Vagina (tissue), 2 donors: ENCODE measurements at regions of chr14 and their contacts with region 1.

Region 1: DNA sequence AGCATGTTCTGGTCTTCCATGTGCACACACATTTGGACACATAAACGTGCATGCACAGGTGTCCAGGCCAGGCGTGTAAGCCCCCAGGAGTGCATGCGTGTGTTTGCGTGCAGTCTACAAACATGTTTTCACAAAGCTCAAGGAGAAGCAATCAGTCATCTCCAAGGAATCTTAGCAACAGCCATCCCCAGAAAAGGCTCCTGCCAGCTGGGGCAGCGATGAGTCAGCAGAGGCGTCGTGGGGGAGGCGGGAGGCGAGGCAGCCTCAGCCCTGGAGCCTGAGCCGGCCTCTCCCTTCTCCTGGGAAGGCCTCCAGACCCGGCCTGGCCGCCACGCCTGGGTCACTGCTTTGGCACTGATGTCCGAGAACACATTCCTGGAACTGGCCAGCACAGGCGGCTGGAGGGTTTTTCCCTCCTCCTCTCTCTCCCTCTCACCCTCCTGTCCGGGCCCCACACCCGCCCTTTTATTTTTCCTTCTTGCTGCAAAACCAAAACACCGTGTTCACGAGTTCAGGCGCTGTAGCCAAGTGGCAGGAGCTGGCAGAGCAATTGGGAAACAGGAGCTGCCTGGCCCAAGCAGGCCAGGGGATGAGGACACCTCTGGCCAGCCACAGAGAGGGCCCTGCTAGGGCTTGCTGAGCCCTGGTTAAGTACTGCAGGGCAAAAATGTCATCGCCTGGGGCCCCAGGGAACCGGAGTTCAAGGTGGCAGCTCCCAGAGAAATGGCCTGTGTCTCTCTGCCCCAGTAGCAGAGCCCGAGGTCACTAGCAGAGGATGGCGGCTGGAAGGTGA is 92.7 kb downstream of the LRRC74A start:
- DNase-seq: peak in 1 of 2 donors; percentile 99
- H3K4me3 ChIP-seq: peak overlapping the region in 1 of 2 donors; percentile 12
- H3K27ac ChIP-seq: peak overlapping the region; percentile 83
- H3K4me1 ChIP-seq: peaks cover 77% of the 10 kb centered on the region
- H3K27me3 ChIP-seq: no peaks in the 10 kb centered on the region
- CTCF ChIP-seq: peak in 1 of 3 experiments; percentile 24
- POLR2A ChIP-seq: no peak

Region 2: DNA sequence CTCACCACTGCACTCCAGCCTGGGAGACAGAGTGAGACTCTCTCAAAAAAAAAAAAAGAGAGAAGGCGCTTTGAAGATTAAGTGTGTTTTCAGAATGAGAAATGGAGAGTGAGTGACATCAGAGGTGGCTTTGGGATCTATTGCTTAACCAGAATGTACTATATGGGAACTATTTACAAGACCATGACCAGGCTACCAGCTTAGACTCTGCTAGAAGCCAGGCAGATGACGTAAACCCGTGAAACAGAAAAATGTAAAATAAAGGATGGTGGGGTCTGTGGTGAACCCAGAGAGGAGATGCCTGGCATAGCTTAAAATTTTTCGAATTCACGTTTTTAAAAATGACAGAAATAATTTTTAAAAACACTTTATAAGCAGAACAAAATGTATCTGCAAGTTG is 851.4 kb before region 1 on chr14:
- intact Hi-C with region 1: no loop called
- DNase-seq: no peak
- H3K4me3 ChIP-seq: no peak overlapping the region
- H3K27ac ChIP-seq: no peak overlapping the region
- H3K4me1 ChIP-seq: no peaks in the 10 kb centered on the region
- H3K27me3 ChIP-seq: no peaks in the 10 kb centered on the region
- CTCF ChIP-seq: no peak
- POLR2A ChIP-seq: no peak

Region 3: GRCh38 chr14:76887196-76887595 is 31.8 kb before region 1 on chr14:
- intact Hi-C with region 1: no loop called
- DNase-seq: no peak
- H3K4me3 ChIP-seq: no peak overlapping the region
- H3K27ac ChIP-seq: no peak overlapping the region
- H3K4me1 ChIP-seq: peaks cover 26% of the 10 kb centered on the region
- H3K27me3 ChIP-seq: no peaks in the 10 kb centered on the region
- CTCF ChIP-seq: no peak
- POLR2A ChIP-seq: no peak

Region 4: DNA sequence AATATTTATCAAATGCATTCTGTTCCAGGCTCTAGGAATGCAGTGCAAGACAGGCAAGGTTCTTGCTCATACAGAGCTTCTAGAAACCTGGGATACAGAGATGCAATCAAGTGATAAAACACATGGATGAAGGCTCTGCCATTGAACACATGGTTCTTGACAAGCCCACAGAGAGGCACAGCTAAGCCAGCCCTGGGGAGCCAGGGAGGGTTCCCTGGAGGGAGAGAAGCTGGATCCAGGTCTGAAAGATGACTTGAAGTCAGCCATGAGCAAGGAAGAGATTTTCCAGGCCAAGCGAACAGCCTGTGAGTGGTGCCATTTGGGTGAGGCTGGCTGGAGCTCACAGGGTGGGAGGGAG is 43.3 kb after region 1 on chr14:
- intact Hi-C with region 1: loop called (anchors 5 kb)
- DNase-seq: no peak
- H3K4me3 ChIP-seq: peak overlapping the region; percentile 29 to 45
- H3K27ac ChIP-seq: peak overlapping the region; percentile 90
- H3K4me1 ChIP-seq: peaks cover 56% of the 10 kb centered on the region
- H3K27me3 ChIP-seq: no peaks in the 10 kb centered on the region
- CTCF ChIP-seq: no peak
- POLR2A ChIP-seq: no peak

Region 5: DNA sequence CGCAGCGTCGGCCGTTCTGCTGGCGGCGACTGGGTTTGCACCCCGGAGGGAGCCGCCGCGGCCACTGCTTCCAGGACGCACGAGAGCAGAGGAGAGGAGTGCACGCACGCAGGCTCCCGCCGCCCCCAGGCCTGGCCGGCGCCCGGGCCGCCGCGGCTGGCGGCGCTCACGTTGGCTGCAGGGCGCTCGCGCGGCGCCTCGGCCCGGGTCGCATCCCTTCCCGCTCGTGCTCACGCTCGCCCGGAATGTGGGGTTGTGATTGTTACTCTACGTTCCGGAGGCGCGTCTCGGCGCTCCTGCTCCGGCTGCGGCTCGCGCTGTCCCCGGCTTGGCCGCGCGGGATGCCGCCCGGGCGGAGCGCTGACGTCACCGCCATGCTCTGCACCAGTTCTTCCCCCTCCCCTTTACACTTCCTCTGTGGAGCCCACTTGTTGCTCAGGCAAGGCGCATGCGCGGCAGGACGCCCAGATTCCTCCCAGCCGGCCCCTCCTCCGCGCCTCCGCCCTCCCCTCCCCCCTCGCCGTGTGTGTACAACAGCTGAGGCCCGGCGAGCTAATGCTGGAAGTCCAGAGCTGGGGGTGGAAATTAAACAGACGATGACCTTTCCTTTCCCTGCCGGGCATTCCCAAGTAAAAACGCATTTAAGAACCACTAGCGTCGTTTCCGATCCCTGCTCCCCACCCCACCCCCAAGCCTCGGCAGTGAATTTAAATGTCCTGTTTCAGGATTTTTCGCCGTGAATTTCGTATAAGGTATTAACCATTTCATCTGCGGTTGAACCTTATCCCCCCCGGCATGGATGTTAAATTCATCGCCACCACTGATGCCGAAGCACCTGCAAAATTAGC is 109.7 kb after region 1 on chr14 and contains the start of gene IRF2BPL:
- intact Hi-C with region 1: loop called (anchors 5 kb)
- DNase-seq: peak in 1 of 2 donors; percentile 100
- H3K4me3 ChIP-seq: peak within 1 kb of the TSS; percentile 60 to 84
- H3K27ac ChIP-seq: peak within 1 kb of the TSS; percentile 98
- H3K4me1 ChIP-seq: peaks cover 70% of the 10 kb centered on the region
- H3K27me3 ChIP-seq: no peaks in the 10 kb centered on the region
- CTCF ChIP-seq: no peak
- POLR2A ChIP-seq: peak in 1 of 2 donors; percentile 97
- total RNA-seq, gene IRF2BPL: 51.1 TPM